Breast epithelium (tissue), 4 donors: ENCODE measurements at regions of chr2 and their contacts with region 1.

Region 1: GRCh38 chr2:167212014-167212648 is 323.9 kb downstream of the XIRP2 start:
- DNase-seq: no peak
- H3K4me3 ChIP-seq: no peak overlapping the region
- H3K27ac ChIP-seq: no peak overlapping the region
- H3K4me1 ChIP-seq: no peaks in the 10 kb centered on the region
- H3K27me3 ChIP-seq: no peaks in the 10 kb centered on the region
- CTCF ChIP-seq: peak; percentile 32 to 53 (median 43)
- POLR2A ChIP-seq: no peak

Region 2: DNA sequence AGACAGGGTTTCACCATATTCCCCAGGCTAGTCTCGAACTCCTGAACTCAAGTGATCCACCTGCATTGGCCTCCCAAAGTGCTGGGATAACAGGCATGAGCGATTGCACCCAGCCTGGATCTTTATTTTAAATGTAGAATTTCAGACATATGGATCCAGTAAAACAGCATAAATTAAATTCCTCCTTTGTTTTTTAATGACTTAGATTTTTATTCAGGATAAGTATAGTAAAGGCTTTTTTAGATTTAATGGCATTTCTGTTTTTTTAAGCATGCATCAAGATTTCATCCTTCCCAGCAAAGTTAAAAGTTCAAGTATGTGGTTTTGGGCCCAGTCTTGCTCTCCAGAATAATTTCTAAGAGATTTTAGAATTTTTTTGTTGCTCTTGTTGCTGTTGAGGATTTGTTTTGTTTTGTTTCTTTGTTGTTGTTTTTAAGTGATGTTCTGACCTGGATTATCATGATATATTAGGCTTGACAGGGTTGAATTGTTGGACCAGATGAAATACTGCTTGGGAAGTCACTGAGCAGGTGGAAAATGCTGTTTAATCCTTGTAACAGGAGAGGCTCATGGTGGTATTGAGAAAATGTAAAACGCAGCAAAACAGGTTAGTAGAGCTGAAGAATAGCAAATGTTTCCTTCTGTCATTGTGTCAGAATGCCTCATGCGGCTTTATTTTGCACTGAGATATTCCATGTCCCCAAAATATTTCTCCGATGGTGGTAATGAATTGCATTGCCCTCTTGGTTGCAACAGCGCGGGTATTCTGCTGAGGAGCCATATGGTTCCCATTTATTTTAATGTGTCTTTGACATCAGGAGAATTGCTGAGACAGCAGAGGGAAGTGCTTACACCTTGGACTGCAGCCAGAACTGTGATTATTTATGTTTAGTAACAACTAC is 1566.0 kb before region 1 on chr2:
- intact Hi-C with region 1: no loop called
- DNase-seq: no peak
- H3K4me3 ChIP-seq: no peak overlapping the region
- H3K27ac ChIP-seq: no peak overlapping the region
- H3K4me1 ChIP-seq: no peaks in the 10 kb centered on the region
- H3K27me3 ChIP-seq: no peaks in the 10 kb centered on the region
- CTCF ChIP-seq: no peak
- POLR2A ChIP-seq: no peak

Region 3: GRCh38 chr2:166609183-166609959 is 602.8 kb before region 1 on chr2:
- intact Hi-C with region 1: loop called (anchors 5 kb)
- DNase-seq: no peak
- H3K4me3 ChIP-seq: no peak overlapping the region
- H3K27ac ChIP-seq: no peak overlapping the region
- H3K4me1 ChIP-seq: no peaks in the 10 kb centered on the region
- H3K27me3 ChIP-seq: no peaks in the 10 kb centered on the region
- CTCF ChIP-seq: no peak
- POLR2A ChIP-seq: no peak

Region 4: GRCh38 chr2:167140767-167141166 is 71.4 kb before region 1 on chr2:
- intact Hi-C with region 1: loop called (anchors 2 kb)
- DNase-seq: peak in 1 of 2 donors; percentile 56
- H3K4me3 ChIP-seq: no peak overlapping the region
- H3K27ac ChIP-seq: no peak overlapping the region
- H3K4me1 ChIP-seq: no peaks in the 10 kb centered on the region
- H3K27me3 ChIP-seq: no peaks in the 10 kb centered on the region
- CTCF ChIP-seq: no peak
- POLR2A ChIP-seq: no peak